IMR-90 (cell line): ENCODE measurements at regions of chr3 and their contacts with region 1.

Region 1: DNA sequence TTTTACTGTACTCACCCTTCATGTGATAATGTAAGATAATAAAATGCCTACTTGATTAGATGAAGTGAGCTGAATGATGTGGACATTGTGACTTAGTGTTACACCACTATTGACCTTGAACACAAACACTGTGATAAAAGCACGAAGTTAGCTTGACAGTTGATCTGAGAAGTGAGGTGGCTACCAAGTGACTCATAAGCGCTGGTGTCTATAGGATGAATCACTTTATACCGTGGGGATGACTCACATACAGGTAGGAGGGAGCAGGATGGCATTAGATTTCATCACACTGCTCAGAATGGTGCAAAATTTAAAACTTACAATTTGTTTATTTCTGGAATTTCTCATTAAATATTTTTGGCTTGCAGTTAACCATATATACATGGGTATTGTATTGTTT is 174.7 kb upstream of the CNTN3 start:
- DNase-seq: peak; percentile 25
- ATAC-seq: no peak
- H3K4me3 ChIP-seq: no peak overlapping the region
- H3K27ac ChIP-seq: no peak overlapping the region
- H3K4me1 ChIP-seq: no peaks in the 10 kb centered on the region
- H3K27me3 ChIP-seq: no peaks in the 10 kb centered on the region
- CTCF ChIP-seq: no peak
- POLR2A ChIP-seq: no peak
- RAD21 ChIP-seq: no peak

Region 2: DNA sequence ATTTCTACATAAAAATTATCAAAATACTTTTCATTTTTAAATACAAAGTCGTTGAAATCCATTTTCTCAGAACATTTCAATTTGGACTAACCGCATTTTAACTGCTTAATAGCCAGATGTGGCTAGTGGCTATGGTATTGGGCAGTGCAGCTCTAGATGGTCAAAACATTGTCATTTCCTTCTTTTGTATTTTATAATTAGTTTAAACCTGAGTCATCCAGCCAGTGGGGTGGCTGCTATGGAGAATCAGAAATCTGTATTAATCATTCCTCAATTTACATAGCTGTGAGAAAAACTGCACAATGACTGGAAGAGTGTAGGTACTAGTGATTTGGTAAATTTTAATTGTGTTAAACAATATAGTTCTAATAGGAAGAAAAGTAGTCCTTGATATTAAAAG is 1409.6 kb before region 1 on chr3:
- CTCF ChIA-PET with region 1: no interaction called
- POLR2A ChIA-PET with region 1: interaction called, 12 read pairs
- dilution Hi-C with region 1: no loop called
- in situ Hi-C with region 1: no loop called
- intact Hi-C with region 1: no loop called
- DNase-seq: no peak
- ATAC-seq: no peak
- H3K4me3 ChIP-seq: no peak overlapping the region
- H3K27ac ChIP-seq: no peak overlapping the region
- H3K4me1 ChIP-seq: no peaks in the 10 kb centered on the region
- H3K27me3 ChIP-seq: no peaks in the 10 kb centered on the region; the same call in 1 of the 2 replicates
- CTCF ChIP-seq: no peak
- POLR2A ChIP-seq: no peak
- RAD21 ChIP-seq: no peak